ENCODE measurements at regions of chr5 and their contacts with region 1.

Region 1: DNA sequence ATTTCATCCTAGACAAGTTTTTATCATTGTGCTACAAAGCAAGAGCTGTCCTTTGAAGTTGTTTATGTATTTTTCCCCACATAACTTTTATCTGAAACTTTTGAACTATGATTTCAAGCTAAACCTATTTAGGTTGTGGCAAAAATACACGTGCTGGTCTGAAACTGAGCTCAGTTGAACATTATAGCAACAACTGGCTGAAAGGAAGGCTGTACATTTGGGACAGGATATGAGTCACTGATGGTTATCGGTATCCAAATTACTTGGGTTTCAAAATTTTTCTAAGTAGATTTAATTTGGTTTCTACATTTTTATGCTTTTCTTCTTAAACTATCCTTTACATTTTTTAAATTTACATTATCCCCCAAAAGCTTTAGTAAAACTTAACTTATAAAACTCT is 627.3 kb upstream of the NUDT12 start:
- DNase-seq: no peak
- H3K4me3 Mint-ChIP-seq: no peak overlapping the region
- H3K27ac Mint-ChIP-seq: no peak overlapping the region
- H3K4me1 Mint-ChIP-seq: no peaks in the 10 kb centered on the region
- H3K27me3 Mint-ChIP-seq: no peaks in the 10 kb centered on the region

Region 2: GRCh38 chr5:104273732-104274131 is 83.8 kb after region 1 on chr5:
- intact Hi-C with region 1: no loop called
- DNase-seq: no peak
- H3K4me3 Mint-ChIP-seq: no peak overlapping the region
- H3K27ac Mint-ChIP-seq: no peak overlapping the region
- H3K4me1 Mint-ChIP-seq: no peaks in the 10 kb centered on the region
- H3K27me3 Mint-ChIP-seq: no peaks in the 10 kb centered on the region

Region 3: DNA sequence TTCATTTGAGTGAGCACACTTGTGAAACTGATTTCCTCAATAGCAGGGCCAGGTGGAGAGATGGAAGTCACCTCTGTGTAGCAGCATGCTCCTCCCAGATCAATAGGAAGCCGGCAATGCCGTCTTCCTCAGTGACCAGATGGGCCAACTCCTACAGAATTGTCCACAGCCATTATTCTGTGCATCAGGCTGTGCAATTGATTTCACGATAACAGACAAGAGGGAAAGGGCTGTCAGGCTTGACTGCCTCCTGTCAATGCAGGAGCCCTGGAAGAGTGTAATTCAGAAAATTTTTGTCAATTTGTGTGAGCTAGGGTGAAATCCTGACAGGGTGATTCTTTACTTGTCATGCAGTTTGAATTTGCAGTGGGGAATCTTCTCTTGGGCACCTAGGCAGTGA is 211.0 kb after region 1 on chr5:
- intact Hi-C with region 1: loop called (anchors 5 kb)
- DNase-seq: no peak
- H3K4me3 Mint-ChIP-seq: no peak overlapping the region
- H3K27ac Mint-ChIP-seq: no peak overlapping the region
- H3K4me1 Mint-ChIP-seq: no peaks in the 10 kb centered on the region
- H3K27me3 Mint-ChIP-seq: no peaks in the 10 kb centered on the region

Measured in activated T-helper 1 cell treated with anti-CD3 and anti-CD28 coated beads, Interleukin-12 subunit alpha, Interleukin-12 subunit beta, Interleukin-2, Interleukin-4 antibody, amounts not matched to agents 30 ng/mL and 10 ng/mL and 1 ng/mL, durations not matched to agents 14 hours and 24 hours and 36 hours (primary cell).